WTC11 (cell line): ENCODE measurements at regions of chr6 and their contacts with region 1.

Region 1: DNA sequence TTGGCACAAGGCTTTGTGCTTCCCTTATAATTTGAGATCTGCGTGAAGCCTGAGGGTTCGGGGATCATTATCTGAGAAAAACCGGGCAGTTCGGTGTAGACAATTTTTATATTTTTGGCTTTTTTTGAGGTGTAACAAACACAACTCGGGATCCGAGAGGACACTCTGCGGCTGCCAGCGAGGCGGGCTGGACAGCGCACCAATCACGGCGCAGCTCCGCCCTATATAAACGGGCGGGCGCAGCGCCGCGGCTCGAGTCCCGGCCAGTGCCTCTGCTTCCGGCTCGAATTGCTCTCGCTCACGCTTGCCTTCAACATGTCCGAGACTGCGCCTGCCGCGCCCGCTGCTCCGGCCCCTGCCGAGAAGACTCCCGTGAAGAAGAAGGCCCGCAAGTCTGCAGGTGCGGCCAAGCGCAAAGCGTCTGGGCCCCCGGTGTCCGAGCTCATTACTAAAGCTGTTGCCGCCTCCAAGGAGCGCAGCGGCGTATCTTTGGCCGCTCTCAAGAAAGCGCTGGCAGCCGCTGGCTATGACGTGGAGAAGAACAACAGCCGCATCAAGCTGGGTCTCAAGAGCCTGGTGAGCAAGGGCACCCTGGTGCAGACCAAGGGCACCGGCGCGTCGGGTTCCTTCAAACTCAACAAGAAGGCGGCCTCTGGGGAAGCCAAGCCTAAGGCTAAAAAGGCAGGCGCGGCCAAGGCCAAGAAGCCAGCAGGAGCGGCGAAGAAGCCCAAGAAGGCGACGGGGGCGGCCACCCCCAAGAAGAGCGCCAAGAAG is 69.0 kb downstream of the HFE start:
- DNase-seq: peak; percentile 81
- ATAC-seq: peak; percentile 47
- H3K4me3 Mint-ChIP-seq: peak overlapping the region; percentile 84
- H3K27ac Mint-ChIP-seq: peak overlapping the region; percentile 98
- H3K4me1 Mint-ChIP-seq: peaks cover 22% of the 10 kb centered on the region
- H3K27me3 Mint-ChIP-seq: peaks cover 3% of the 10 kb centered on the region; the same call in 1 of the 2 replicates
- CTCF ChIP-seq: no peak

Region 2: DNA sequence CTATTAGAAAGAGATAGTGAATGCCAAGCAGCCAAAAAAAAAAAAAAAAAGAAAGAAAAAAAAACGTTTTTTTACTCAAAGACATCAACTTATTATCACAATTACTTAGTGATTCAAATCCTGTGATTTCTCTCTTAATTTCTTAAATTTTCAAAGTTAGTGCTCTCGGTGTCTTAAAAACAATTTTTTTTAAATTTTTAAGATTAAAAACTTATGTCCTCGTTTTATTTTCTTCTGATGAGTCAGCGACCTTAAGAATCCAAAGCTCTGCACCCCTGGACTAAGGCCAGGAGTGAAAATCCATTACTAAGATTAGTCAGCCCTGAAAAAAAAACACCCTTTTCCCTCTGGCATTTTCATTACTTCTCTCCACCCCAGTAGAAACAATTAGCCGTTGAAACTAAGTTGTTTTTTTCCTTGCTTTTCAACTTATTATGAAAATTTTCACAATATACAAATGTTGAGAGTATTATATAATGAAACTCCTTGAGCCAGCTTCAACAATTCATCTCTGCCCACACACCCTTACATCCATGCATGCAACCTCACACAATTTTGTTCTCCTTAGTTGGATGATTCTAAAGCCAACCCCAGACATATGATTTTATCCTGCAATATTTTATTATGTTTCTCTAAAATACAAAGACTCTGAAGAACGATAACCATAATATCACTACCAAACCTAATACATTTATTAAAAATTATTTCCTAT is 962.6 kb before region 1 on chr6:
- CTCF ChIA-PET with region 1: no interaction called
- POLR2A ChIA-PET with region 1: no interaction called
- DNase-seq: no peak
- ATAC-seq: no peak
- H3K4me3 Mint-ChIP-seq: no peak overlapping the region
- H3K27ac Mint-ChIP-seq: no peak overlapping the region
- H3K4me1 Mint-ChIP-seq: no peaks in the 10 kb centered on the region
- H3K27me3 Mint-ChIP-seq: no peaks in the 10 kb centered on the region
- CTCF ChIP-seq: no peak

Region 3: DNA sequence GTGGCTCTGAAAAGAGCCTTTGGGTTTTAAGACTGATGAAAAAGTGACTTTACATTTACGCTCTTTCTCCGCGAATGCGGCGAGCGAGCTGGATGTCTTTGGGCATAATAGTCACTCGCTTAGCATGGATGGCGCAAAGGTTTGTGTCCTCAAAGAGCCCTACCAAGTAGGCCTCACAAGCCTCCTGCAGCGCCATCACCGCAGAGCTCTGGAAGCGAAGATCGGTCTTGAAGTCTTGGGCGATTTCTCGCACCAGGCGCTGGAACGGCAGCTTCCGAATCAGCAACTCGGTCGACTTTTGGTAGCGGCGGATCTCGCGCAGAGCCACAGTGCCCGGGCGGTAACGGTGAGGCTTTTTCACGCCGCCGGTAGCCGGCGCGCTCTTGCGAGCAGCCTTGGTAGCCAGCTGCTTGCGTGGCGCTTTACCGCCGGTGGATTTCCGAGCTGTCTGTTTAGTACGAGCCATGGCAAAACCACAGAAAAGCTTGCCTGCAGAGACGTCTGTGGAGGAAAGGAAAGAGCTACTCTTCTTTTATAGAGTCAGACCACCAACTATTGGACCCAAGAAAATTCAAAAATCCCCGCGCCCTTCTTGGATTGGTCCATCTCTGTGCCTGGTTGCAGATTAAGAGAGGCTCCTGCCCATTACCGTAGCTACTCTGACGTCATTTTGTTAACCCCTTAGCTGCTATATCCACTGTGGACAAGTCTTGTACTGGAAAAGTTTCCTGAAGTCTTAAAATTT is 124.5 kb before region 1 on chr6:
- CTCF ChIA-PET with region 1: no interaction called
- POLR2A ChIA-PET with region 1: interaction called, 72 read pairs
- DNase-seq: peak; percentile 80
- ATAC-seq: peak; percentile 67
- H3K4me3 Mint-ChIP-seq: peak overlapping the region; percentile 91
- H3K27ac Mint-ChIP-seq: peak overlapping the region; percentile 100
- H3K4me1 Mint-ChIP-seq: peaks cover 59% of the 10 kb centered on the region
- H3K27me3 Mint-ChIP-seq: no peaks in the 10 kb centered on the region
- CTCF ChIP-seq: no peak

Region 4: GRCh38 chr6:26136321-26136720 is 19.9 kb before region 1 on chr6:
- CTCF ChIA-PET with region 1: no interaction called
- POLR2A ChIA-PET with region 1: interaction called, 10 read pairs
- DNase-seq: no peak
- ATAC-seq: no peak
- H3K4me3 Mint-ChIP-seq: no peak overlapping the region
- H3K27ac Mint-ChIP-seq: no peak overlapping the region
- H3K4me1 Mint-ChIP-seq: peaks cover 22% of the 10 kb centered on the region
- H3K27me3 Mint-ChIP-seq: no peaks in the 10 kb centered on the region
- CTCF ChIP-seq: no peak

Region 5: GRCh38 chr6:26183581-26184366 is 27.5 kb after region 1 on chr6:
- CTCF ChIA-PET with region 1: interaction called, 4 read pairs
- POLR2A ChIA-PET with region 1: interaction called, 171 read pairs
- DNase-seq: peak; percentile 74
- ATAC-seq: peak; percentile 78
- H3K4me3 Mint-ChIP-seq: peak overlapping the region; percentile 90
- H3K27ac Mint-ChIP-seq: peak overlapping the region; percentile 99
- H3K4me1 Mint-ChIP-seq: peaks cover 45% of the 10 kb centered on the region
- H3K27me3 Mint-ChIP-seq: no peaks in the 10 kb centered on the region
- CTCF ChIP-seq: no peak

Region 6: GRCh38 chr6:26234421-26235296 is 78.4 kb after region 1 on chr6:
- CTCF ChIA-PET with region 1: no interaction called
- POLR2A ChIA-PET with region 1: interaction called, 38 read pairs
- DNase-seq: no peak
- ATAC-seq: peak; percentile 70
- H3K4me3 Mint-ChIP-seq: peak overlapping the region; percentile 94
- H3K27ac Mint-ChIP-seq: peak overlapping the region; percentile 99
- H3K4me1 Mint-ChIP-seq: peaks cover 33% of the 10 kb centered on the region
- H3K27me3 Mint-ChIP-seq: no peaks in the 10 kb centered on the region
- CTCF ChIP-seq: no peak

Region 7: GRCh38 chr6:26258200-26258977 is 102.1 kb after region 1 on chr6:
- CTCF ChIA-PET with region 1: no interaction called
- POLR2A ChIA-PET with region 1: no interaction called
- DNase-seq: no peak
- ATAC-seq: peak; percentile 40
- H3K4me3 Mint-ChIP-seq: no peak overlapping the region
- H3K27ac Mint-ChIP-seq: peak overlapping the region; percentile 44; the same call in 1 of the 2 replicates
- H3K4me1 Mint-ChIP-seq: peaks cover 34% of the 10 kb centered on the region
- H3K27me3 Mint-ChIP-seq: no peaks in the 10 kb centered on the region
- CTCF ChIP-seq: no peak

Region 8: DNA sequence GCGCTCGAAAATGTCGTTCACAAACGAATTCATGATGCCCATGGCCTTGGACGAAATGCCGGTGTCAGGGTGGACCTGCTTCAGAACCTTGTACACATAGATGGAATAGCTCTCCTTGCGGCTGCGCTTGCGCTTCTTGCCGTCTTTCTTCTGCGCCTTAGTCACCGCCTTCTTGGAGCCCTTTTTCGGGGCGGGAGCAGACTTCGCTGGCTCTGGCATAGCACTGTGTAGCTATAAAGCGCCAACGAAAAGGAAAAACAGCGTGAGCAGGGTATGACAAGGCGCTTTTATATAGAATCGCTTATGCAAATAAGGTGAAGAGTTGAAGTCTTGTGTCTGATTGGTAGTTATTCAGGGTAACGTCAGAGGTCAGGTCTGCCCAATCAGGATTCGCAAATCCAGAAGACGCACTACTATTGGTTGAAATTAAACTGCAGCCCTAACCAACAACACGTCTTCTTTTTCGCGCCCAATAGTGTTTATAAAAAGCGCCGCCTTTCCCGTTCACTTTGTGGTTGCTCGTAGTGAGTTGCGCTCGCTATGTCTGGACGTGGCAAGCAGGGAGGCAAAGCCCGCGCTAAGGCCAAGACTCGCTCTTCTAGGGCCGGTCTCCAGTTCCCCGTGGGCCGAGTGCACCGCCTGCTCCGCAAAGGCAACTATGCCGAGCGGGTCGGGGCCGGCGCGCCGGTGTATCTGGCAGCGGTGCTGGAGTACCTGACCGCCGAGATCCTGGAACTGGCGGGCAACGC is 976.4 kb after region 1 on chr6:
- CTCF ChIA-PET with region 1: no interaction called
- POLR2A ChIA-PET with region 1: interaction called, 37 read pairs
- DNase-seq: peak; percentile 85
- ATAC-seq: peak; percentile 86
- H3K4me3 Mint-ChIP-seq: no peak overlapping the region
- H3K27ac Mint-ChIP-seq: no peak overlapping the region
- H3K4me1 Mint-ChIP-seq: peaks cover 65% of the 10 kb centered on the region
- H3K27me3 Mint-ChIP-seq: no peaks in the 10 kb centered on the region
- CTCF ChIP-seq: no peak

Region 9: DNA sequence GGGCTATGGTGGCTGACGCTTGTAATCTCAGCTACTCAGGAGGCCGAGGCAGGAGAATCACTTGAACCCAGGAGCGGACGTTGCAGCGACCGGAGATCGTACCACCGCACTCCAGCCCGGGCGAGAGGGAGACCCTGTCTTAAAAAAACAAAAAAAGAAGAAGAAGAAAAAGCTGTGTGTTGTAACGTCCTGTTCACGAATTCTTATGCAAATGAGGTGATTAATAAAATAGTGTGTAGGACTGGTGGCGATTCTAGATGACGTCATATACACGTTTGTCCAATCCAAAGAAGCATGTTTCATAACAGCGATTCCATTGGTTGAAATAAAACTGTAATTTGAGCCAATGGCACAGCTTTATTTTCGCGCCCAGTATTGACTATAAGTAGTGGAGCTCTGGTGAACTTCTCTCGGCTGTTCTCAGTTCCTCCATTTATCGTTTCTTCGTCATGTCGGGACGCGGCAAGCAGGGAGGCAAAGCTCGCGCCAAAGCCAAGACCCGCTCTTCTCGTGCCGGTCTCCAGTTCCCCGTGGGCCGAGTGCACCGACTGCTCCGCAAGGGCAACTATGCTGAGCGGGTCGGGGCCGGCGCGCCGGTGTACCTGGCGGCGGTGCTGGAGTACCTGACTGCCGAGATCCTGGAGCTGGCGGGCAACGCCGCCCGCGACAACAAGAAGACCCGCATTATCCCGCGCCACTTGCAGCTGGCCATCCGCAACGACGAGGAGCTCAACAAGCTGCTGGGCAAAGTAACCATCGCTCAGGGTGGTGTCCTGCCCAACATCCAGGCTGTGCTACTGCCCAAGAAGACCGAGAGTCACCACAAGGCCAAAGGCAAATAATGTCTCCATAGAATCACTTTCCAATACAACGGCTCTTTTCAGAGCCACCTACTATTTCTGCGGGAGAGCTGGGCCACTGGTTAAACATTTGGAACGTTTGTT is 1708.9 kb after region 1 on chr6:
- CTCF ChIA-PET with region 1: no interaction called
- POLR2A ChIA-PET with region 1: interaction called, 12 read pairs
- DNase-seq: peak; percentile 73
- ATAC-seq: peak; percentile 51
- H3K4me3 Mint-ChIP-seq: peak overlapping the region; percentile 97
- H3K27ac Mint-ChIP-seq: peak overlapping the region; percentile 100
- H3K4me1 Mint-ChIP-seq: peaks cover 25% of the 10 kb centered on the region
- H3K27me3 Mint-ChIP-seq: peaks cover 4% of the 10 kb centered on the region; the same call in 1 of the 2 replicates
- CTCF ChIP-seq: no peak